Activated CD8-positive, alpha-beta memory T cell treated with anti-CD3 and anti-CD28 coated beads, Interleukin-2, amount 10 ng/mL, durations not matched to agents 7 days and 5 days (primary cell): ENCODE measurements at regions of chr1 and their contacts with region 1.

Region 1: DNA sequence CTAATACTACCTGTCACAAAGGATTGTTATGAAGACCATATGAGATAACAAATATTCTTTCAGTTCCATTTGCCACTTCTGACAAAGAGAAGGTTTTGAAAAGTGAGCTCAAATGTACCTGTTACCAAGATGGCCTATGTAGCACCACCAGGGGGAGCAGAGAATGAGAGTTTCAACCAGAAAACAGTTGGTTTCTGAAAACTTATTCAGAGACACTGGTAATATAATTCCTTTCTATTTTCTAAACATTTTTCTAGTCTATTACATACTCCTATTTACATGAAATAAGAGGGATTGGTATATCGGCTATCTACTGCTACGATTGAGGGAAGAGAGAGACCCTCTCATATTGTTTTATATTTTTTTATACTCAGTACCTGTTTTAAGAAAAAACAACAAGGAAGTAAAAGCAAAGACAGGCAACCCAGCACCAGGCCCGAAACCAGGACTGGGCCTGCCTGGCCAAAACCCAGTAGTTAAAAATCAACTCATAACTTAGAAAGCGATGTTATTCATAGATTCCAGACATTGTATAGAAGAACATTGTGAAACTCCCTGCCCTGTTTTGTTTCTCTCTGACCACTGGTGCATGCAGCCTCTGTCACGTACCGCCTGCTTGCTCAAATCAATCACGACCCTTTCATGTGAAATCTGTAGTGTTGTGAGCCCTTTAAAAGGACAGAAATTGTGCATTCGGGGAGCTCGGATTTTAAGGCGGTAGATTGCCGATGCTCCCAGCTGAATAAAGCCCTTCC is 48.3 kb downstream of the IL23R start:
- DNase-seq: peak; percentile 72
- ATAC-seq: no peak
- H3K4me3 Mint-ChIP-seq: no peak overlapping the region
- H3K27ac Mint-ChIP-seq: no peak overlapping the region
- H3K4me1 Mint-ChIP-seq: peaks cover 4% of the 10 kb centered on the region
- H3K27me3 Mint-ChIP-seq: no peaks in the 10 kb centered on the region

Region 2: DNA sequence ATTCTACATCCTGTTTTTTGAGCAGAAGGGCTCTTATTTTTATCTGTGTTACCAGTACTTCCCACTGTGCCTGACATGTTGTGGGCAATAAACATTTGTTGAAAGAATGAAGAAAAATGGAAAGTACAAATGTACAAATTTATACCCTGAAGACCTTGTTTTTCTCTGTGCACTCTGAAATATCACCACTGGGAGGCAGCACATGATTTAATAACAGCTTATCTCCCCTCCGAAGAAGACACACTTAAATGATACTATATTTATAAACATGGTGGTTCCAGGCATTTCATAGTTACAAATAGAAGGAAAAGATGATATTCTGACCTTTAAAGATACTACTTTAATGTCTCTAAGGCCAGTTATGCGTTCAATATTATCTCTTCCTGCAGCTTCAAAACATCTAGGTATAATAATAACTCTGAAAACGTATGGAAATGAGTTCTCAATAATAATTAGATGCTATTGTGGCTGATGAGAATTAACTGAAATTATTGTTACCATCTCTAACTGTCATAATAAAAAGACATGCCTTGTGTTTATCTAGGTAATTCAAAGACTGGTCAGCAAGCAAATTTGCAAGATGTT is 449.5 kb before region 1 on chr1:
- CTCF ChIA-PET with region 1: interaction called, 17 read pairs
- DNase-seq: peak; percentile 67
- ATAC-seq: no peak
- H3K4me3 Mint-ChIP-seq: no peak overlapping the region
- H3K27ac Mint-ChIP-seq: no peak overlapping the region
- H3K4me1 Mint-ChIP-seq: peaks cover 16% of the 10 kb centered on the region
- H3K27me3 Mint-ChIP-seq: no peaks in the 10 kb centered on the region

Region 3: GRCh38 chr1:67134695-67135094 is 79.9 kb before region 1 on chr1 and contains the start of gene C1orf141:
- CTCF ChIA-PET with region 1: interaction called, 11 read pairs
- DNase-seq: no peak
- ATAC-seq: no peak
- H3K4me3 Mint-ChIP-seq: peak within 1 kb of the TSS; percentile 67
- H3K27ac Mint-ChIP-seq: no peak within 1 kb of the TSS
- H3K4me1 Mint-ChIP-seq: peaks cover 6% of the 10 kb centered on the region
- H3K27me3 Mint-ChIP-seq: peaks cover 15% of the 10 kb centered on the region
- total RNA-seq, gene C1orf141: not detected

Region 4: GRCh38 chr1:67162957-67163356 is 51.6 kb before region 1 on chr1:
- CTCF ChIA-PET with region 1: interaction called, 21 read pairs
- DNase-seq: peak; percentile 82
- ATAC-seq: peak; percentile 94
- H3K4me3 Mint-ChIP-seq: no peak overlapping the region
- H3K27ac Mint-ChIP-seq: peak overlapping the region; percentile 71
- H3K4me1 Mint-ChIP-seq: peaks cover 40% of the 10 kb centered on the region
- H3K27me3 Mint-ChIP-seq: peaks cover 12% of the 10 kb centered on the region

Region 5: GRCh38 chr1:67201891-67202290 is 12.7 kb before region 1 on chr1:
- CTCF ChIA-PET with region 1: interaction called, 38 read pairs
- DNase-seq: no peak
- ATAC-seq: no peak
- H3K4me3 Mint-ChIP-seq: no peak overlapping the region
- H3K27ac Mint-ChIP-seq: no peak overlapping the region
- H3K4me1 Mint-ChIP-seq: no peaks in the 10 kb centered on the region
- H3K27me3 Mint-ChIP-seq: peaks cover 6% of the 10 kb centered on the region

Region 6: GRCh38 chr1:67280696-67281095 is 66.1 kb after region 1 on chr1:
- CTCF ChIA-PET with region 1: interaction called, 10 read pairs
- DNase-seq: no peak
- ATAC-seq: no peak
- H3K4me3 Mint-ChIP-seq: no peak overlapping the region
- H3K27ac Mint-ChIP-seq: no peak overlapping the region
- H3K4me1 Mint-ChIP-seq: peaks cover 5% of the 10 kb centered on the region
- H3K27me3 Mint-ChIP-seq: peaks cover 9% of the 10 kb centered on the region